ENCODE measurements at regions of chrX and their contacts with region 1.

Region 1: DNA sequence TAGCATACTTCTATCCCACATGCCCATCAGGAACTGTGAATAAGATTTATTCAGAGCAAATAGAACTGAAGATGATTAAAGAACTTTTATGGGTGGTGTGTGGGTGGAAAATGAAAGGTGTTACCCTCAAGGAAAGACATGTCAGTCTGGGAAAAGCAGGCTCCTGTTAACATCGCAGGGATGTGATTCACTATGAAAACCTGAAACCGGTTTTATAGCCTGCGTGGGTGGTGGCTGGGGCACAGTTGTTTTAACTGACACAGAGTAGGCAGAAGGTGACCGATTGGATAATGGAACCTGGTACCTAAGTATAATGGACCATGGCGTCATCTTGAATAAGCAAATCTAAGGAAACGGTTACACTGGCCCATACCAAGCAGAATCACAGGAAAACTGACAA is 61.3 kb upstream of the CASK start:
- DNase-seq: no peak
- H3K4me3 Mint-ChIP-seq: no peak overlapping the region
- H3K27ac Mint-ChIP-seq: no peak overlapping the region
- H3K4me1 Mint-ChIP-seq: no peaks in the 10 kb centered on the region
- H3K27me3 Mint-ChIP-seq: no peaks in the 10 kb centered on the region

Region 2: DNA sequence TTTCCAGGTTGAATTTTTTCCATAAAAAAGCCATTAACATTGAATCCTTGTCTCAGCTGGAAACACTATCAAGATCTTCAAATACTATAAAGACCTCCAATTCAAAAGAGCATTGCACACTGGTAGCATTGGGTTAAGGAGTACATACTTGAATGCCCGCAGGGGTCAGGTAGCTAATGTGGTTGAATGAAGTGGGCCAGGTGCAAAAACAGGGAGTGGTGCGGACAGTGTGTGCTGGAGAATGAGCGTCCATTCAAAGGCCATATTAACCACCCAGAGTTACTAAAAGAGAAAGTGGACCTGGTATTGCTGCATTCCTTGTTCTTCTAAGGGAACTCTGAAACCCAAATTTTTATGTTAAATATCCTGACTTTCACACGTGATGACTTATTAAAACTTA is 445.9 kb before region 1 on chrX:
- CTCF ChIA-PET with region 1: no interaction called
- intact Hi-C with region 1: loop called (anchors 5 kb)
- DNase-seq: no peak
- H3K4me3 Mint-ChIP-seq: no peak overlapping the region
- H3K27ac Mint-ChIP-seq: no peak overlapping the region
- H3K4me1 Mint-ChIP-seq: no peaks in the 10 kb centered on the region
- H3K27me3 Mint-ChIP-seq: no peaks in the 10 kb centered on the region